ENCODE measurements at regions of chr7 and their contacts with region 1.

Region 1: GRCh38 chr7:99438573-99439480 is at the starts of genes CPSF4 and PTCD1:
- DNase-seq: peak; percentile 91
- H3K4me3 Mint-ChIP-seq: peak within 1 kb of the TSS; percentile 98
- H3K27ac Mint-ChIP-seq: peak within 1 kb of the TSS; percentile 88
- H3K4me1 Mint-ChIP-seq: peaks cover 28% of the 10 kb centered on the region
- H3K27me3 Mint-ChIP-seq: no peaks in the 10 kb centered on the region
- total RNA-seq, gene CPSF4: 92.3 and 93.2 TPM in 2 replicates
- total RNA-seq, gene PTCD1: 13.7 and 16.0 TPM in 2 replicates

Region 2: GRCh38 chr7:99380032-99380822 is 58.6 kb before region 1 on chr7:
- intact Hi-C with region 1: loop called (anchors 2 kb)
- DNase-seq: peak; percentile 26
- H3K4me3 Mint-ChIP-seq: peak overlapping the region; percentile 86
- H3K27ac Mint-ChIP-seq: peak overlapping the region; percentile 91
- H3K4me1 Mint-ChIP-seq: peaks cover 34% of the 10 kb centered on the region
- H3K27me3 Mint-ChIP-seq: no peaks in the 10 kb centered on the region

Region 3: GRCh38 chr7:99392677-99393354 is 46.0 kb before region 1 on chr7:
- intact Hi-C with region 1: loop called (anchors 1 kb)
- DNase-seq: peak; percentile 69
- H3K4me3 Mint-ChIP-seq: peak overlapping the region; percentile 63
- H3K27ac Mint-ChIP-seq: peak overlapping the region; percentile 68
- H3K4me1 Mint-ChIP-seq: peaks cover 16% of the 10 kb centered on the region
- H3K27me3 Mint-ChIP-seq: no peaks in the 10 kb centered on the region

Region 4: DNA sequence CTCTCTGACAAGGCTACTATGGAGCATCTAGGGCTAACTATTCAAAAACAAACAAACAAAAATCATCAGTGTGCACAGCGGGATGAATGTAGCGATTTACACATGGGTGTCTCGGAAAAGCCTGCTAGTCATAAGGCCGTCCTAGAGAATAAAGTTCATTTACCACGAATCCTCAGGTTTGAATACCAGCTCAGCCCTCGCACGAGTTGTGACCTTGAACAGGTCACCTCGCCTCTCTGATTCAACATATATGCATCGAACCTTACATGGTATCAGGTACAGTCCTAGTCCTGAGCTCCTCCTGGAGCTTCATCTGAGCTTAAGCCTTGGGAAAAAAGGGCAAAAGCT is 26.6 kb after region 1 on chr7:
- intact Hi-C with region 1: loop called (anchors 1 kb)
- DNase-seq: no peak
- H3K4me3 Mint-ChIP-seq: peak overlapping the region; percentile 91
- H3K27ac Mint-ChIP-seq: peak overlapping the region; percentile 73
- H3K4me1 Mint-ChIP-seq: peaks cover 27% of the 10 kb centered on the region
- H3K27me3 Mint-ChIP-seq: no peaks in the 10 kb centered on the region

Region 5: GRCh38 chr7:99472561-99473243 is 33.9 kb after region 1 on chr7 and contains the start of gene ZNF789:
- intact Hi-C with region 1: loop called (anchors 1 kb)
- DNase-seq: peak; percentile 96
- H3K4me3 Mint-ChIP-seq: peak within 1 kb of the TSS; percentile 99
- H3K27ac Mint-ChIP-seq: peak within 1 kb of the TSS; percentile 92
- H3K4me1 Mint-ChIP-seq: peaks cover 30% of the 10 kb centered on the region
- H3K27me3 Mint-ChIP-seq: peaks cover 1% of the 10 kb centered on the region
- total RNA-seq, gene ZNF789: 19.6 and 22.4 TPM in 2 replicates